K562 (cell line): ENCODE measurements at regions of chr14 and their contacts with region 1.

Region 1: DNA sequence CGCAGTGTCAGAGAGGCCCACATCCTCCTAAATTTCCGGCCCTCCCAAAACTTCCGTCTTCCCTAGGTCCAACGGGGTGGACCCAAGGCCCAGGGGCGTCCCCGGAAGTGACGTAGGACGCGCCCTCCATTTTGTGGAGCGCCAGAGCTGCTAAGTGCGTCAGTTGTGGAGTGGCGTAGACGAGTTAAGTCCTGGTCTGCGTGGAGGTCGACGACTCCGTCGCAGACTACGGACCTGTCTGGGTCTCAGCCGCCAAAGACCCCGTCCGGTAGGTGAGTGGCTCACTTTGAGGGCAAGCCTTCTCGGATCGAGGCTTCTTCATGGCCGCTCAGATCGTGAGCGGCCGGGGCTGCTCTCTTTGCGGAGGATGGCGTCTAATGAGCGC is at the start of gene SRSF5:
- DNase-seq: peak; percentile 82 to 97 (median 86)
- ATAC-seq: peak; percentile 95
- H3K4me3 ChIP-seq: peak within 1 kb of the TSS; percentile 100
- H3K27ac ChIP-seq: peak within 1 kb of the TSS; percentile 100
- H3K4me1 ChIP-seq: peaks cover 8 to 11% of the 10 kb centered on the region in 2 experiments; a peak in 3 of 5 replicates
- H3K27me3 ChIP-seq: no peaks in the 10 kb centered on the region
- CTCF ChIP-seq: no peak
- EP300 ChIP-seq: no peak
- POLR2A ChIP-seq: peak; percentile 99
- RAD21 ChIP-seq: no peak
- polyA plus RNA-seq, gene SRSF5: 108 to 206 TPM

Region 2: DNA sequence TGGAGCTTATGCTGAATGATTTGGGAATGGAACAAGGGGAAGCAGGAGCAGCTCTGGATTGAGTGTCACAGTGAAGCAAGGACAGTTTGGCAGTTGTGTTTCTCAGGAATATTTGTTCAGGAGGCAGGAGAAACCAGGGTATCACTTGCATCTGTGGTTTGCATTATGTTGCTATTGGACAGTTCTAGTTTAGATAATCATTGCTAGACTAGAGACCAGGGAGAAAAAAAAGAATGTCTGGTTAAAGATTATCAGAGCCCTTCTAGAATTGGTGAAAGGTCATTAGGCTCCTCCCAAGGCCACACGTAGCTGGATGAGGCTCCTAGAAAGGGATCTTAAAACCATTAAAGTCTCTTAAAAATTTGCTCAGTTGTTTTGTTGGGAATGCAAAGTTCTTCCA is 17.0 kb before region 1 on chr14:
- CTCF ChIA-PET with region 1: no interaction called
- POLR2A ChIA-PET with region 1: interaction called, 24 read pairs
- in situ Hi-C with region 1: no loop called
- intact Hi-C with region 1: no loop called
- DNase-seq: no peak
- ATAC-seq: peak; percentile 57
- H3K4me3 ChIP-seq: no peak overlapping the region
- H3K27ac ChIP-seq: no peak overlapping the region
- H3K4me1 ChIP-seq: peaks cover 0 to 14% of the 10 kb centered on the region in 2 experiments; a peak in 3 of 5 replicates
- H3K27me3 ChIP-seq: no peaks in the 10 kb centered on the region
- CTCF ChIP-seq: no peak
- EP300 ChIP-seq: no peak
- POLR2A ChIP-seq: no peak
- RAD21 ChIP-seq: no peak

Region 3: GRCh38 chr14:69755784-69756183 is 11.2 kb before region 1 on chr14:
- CTCF ChIA-PET with region 1: no interaction called
- POLR2A ChIA-PET with region 1: interaction called, 24 read pairs
- in situ Hi-C with region 1: no loop called
- intact Hi-C with region 1: no loop called
- DNase-seq: no peak
- ATAC-seq: no peak
- H3K4me3 ChIP-seq: no peak overlapping the region
- H3K27ac ChIP-seq: peak overlapping the region; percentile 32; the same call in 1 of the 3 replicates
- H3K4me1 ChIP-seq: peaks cover 4 to 22% of the 10 kb centered on the region in 2 experiments; a peak in 4 of 5 replicates
- H3K27me3 ChIP-seq: no peaks in the 10 kb centered on the region
- CTCF ChIP-seq: no peak
- EP300 ChIP-seq: no peak
- POLR2A ChIP-seq: no peak
- RAD21 ChIP-seq: no peak

Region 4: DNA sequence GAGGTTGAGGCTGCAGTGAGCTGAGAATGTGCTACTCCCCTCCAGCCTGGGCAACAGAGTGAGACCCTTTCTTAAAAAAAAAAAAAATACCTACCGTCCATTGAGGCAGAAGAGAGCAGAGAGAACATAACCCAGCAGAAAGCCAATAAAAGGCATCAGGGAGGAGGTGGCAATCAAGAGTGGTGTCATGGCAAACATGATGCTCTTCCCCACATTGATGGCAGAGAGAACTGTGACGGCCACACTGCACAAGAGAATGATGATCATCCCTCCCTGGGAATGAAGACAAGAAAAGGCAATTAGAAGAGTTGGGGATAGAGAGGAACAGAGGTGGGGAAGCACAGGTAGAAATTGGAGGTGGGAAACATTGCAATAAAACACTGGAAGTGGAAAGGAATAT is 12.1 kb after region 1 on chr14:
- CTCF ChIA-PET with region 1: no interaction called
- POLR2A ChIA-PET with region 1: interaction called, 11 read pairs
- in situ Hi-C with region 1: no loop called
- intact Hi-C with region 1: no loop called
- DNase-seq: no peak
- ATAC-seq: peak; percentile 11; the same call in 1 of the 3 replicates
- H3K4me3 ChIP-seq: no peak overlapping the region
- H3K27ac ChIP-seq: no peak overlapping the region
- H3K4me1 ChIP-seq: no peaks in the 10 kb centered on the region; a peak in 1 of 5 replicates
- H3K27me3 ChIP-seq: no peaks in the 10 kb centered on the region
- CTCF ChIP-seq: no peak
- EP300 ChIP-seq: no peak
- POLR2A ChIP-seq: peak; percentile 47; the same call in 1 of the 2 replicates
- RAD21 ChIP-seq: no peak